ENCODE measurements at regions of chrX and their contacts with region 1.

Region 1: DNA sequence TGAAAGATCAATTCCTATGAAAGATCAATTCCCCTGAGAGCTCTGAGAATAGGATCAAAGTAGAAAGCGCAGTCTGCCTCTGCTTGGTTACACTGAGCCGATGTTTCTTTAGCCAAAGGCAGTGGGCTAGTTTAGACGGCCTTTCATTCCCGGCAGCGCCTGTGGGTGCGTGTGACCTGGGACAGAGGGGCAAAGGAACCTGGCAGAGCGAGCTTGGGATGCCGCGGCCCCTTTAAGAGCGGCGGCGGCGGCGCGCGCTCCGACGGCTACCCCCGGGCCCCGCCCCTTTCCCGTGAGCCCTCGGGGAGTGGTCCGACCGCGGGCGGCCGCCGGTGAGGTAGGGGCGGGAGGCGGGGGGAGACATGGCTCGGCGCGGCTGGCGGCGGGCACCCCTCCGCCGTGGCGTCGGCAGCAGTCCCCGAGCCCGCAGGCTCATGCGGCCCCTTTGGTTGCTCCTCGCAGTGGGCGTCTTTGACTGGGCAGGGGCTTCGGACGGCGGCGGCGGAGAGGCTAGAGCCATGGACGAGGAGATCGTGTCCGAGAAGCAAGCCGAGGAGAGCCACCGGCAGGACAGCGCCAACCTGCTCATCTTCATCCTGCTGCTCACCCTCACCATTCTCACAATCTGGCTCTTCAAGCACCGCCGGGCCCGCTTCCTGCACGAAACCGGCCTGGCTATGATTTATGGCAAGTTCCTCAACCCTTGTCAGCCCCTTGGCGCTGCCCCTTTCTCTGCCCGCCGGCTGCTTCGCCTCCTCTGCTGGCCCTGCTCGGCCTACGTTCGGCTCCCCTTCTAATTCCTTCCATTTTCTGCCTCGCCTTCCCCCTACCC is at the start of gene SLC9A6:
- DNase-seq: peak; percentile 72
- H3K4me3 Mint-ChIP-seq: peak within 1 kb of the TSS; percentile 94
- H3K27ac Mint-ChIP-seq: peak within 1 kb of the TSS; percentile 79
- H3K4me1 Mint-ChIP-seq: peaks cover 52% of the 10 kb centered on the region
- H3K27me3 Mint-ChIP-seq: no peaks in the 10 kb centered on the region
- total RNA-seq, gene SLC9A6: 18.6 to 20.9 TPM

Region 2: GRCh38 chrX:135973548-135974278 is 11.6 kb before region 1 on chrX and contains the start of gene MMGT1:
- CTCF ChIA-PET with region 1: interaction called, 3 read pairs
- POLR2A ChIA-PET with region 1: interaction called, 31 read pairs
- DNase-seq: peak; percentile 85
- H3K4me3 Mint-ChIP-seq: peak within 1 kb of the TSS; percentile 94
- H3K27ac Mint-ChIP-seq: peak within 1 kb of the TSS; percentile 93
- H3K4me1 Mint-ChIP-seq: peaks cover 47% of the 10 kb centered on the region
- H3K27me3 Mint-ChIP-seq: no peaks in the 10 kb centered on the region
- total RNA-seq, gene MMGT1: 19.2 to 19.3 TPM